ENCODE measurements at regions of chr20 and their contacts with region 1.

Region 1: GRCh38 chr20:62793912-62794724 is 2.2 kb upstream of the MRGBP start:
- DNase-seq: peak; percentile 95
- H3K4me3 ChIP-seq: peak overlapping the region; percentile 64 to 74
- H3K27ac ChIP-seq: peak overlapping the region; percentile 71 to 88
- H3K4me1 ChIP-seq: peaks cover 22 to 23% of the 10 kb centered on the region in 2 experiments; a peak in 3 of 4 replicates
- H3K27me3 ChIP-seq: no peaks in the 10 kb centered on the region
- CTCF ChIP-seq: no peak
- EP300 ChIP-seq: no peak
- RAD21 ChIP-seq: no peak

Region 2: DNA sequence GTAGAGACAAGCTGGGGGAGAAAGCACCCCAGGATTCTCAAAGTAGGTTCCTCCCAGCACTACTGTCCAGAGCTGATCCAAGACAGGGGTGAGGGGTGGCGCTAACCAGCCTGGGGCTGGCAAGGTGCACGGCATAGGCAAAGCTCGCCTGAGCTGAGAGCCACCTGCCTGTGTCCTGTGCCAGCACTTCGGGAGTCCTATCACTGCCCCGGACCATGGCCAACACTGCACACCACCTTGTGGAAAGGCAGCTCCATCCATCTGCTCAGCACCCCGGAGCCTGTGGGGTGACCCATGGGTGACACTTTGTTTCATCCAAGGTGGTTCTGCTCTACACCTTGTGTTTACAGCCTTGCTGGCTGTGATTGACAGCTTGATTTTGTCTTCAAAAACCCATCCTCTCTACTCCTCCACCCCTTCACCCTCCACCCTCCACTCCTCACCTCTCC is 285.5 kb before region 1 on chr20:
- CTCF ChIA-PET with region 1: interaction called, 10 read pairs
- POLR2A ChIA-PET with region 1: no interaction called
- DNase-seq: no peak
- H3K4me3 ChIP-seq: no peak overlapping the region
- H3K27ac ChIP-seq: no peak overlapping the region
- H3K4me1 ChIP-seq: peaks cover 0 to 5% of the 10 kb centered on the region in 2 experiments; a peak in 1 of 4 replicates
- H3K27me3 ChIP-seq: no peaks in the 10 kb centered on the region; the same call in 1 of the 2 replicates
- CTCF ChIP-seq: no peak
- EP300 ChIP-seq: no peak
- RAD21 ChIP-seq: no peak

Region 3: DNA sequence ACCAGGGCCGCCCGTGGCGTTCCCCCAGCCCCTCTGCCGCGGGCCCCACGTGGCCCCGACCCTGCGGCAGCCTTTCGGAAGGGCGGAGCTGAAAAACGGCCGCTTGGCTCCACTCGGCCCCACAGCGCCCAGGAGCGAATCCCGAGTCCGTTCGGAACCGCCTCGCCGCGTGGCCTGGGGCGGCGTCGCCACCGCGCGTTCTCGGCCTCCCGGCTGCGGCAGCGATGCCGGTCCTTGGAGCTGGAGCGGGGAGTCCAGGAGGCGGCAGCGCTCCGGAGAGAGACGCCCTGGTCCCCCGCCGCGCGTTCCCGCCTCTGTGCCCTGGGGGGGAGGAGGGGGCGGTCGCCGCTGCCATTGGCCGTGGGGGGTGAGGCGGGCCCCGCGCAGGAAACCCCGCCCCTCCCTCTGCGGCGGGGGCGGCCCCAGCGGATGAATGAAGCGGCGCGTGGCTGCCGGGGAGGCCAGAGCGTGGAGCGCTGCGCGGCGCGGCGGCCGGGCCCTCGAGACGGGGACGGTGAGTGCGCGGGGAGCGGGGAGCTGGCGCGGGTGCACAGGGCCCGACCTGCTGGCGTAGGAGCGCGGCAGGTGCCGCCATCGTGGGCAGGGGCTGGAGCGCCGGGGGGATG is 152.0 kb before region 1 on chr20 and contains the start of gene SLCO4A1:
- CTCF ChIA-PET with region 1: interaction called, 30 read pairs
- POLR2A ChIA-PET with region 1: interaction called, 5 read pairs
- DNase-seq: peak; percentile 98
- H3K4me3 ChIP-seq: peak within 1 kb of the TSS; percentile 35 to 56; a peak in 3 of 4 replicates
- H3K27ac ChIP-seq: peak within 1 kb of the TSS in 1 of 2 experiments; percentile 74; a peak in 1 of 4 replicates
- H3K4me1 ChIP-seq: peaks cover 0 to 64% of the 10 kb centered on the region in 2 experiments; a peak in 2 of 4 replicates
- H3K27me3 ChIP-seq: peaks cover 37% of the 10 kb centered on the region
- CTCF ChIP-seq: no peak
- EP300 ChIP-seq: no peak
- RAD21 ChIP-seq: no peak
- polyA plus RNA-seq, gene SLCO4A1: 0.33 and 0.36 TPM in 2 replicates

Region 4: GRCh38 chr20:62675156-62675876 is 118.8 kb before region 1 on chr20:
- CTCF ChIA-PET with region 1: interaction called, 162 read pairs
- POLR2A ChIA-PET with region 1: interaction called, 3 read pairs
- DNase-seq: peak; percentile 64
- H3K4me3 ChIP-seq: no peak overlapping the region
- H3K27ac ChIP-seq: no peak overlapping the region
- H3K4me1 ChIP-seq: peaks cover 0 to 4% of the 10 kb centered on the region in 2 experiments; a peak in 1 of 4 replicates
- H3K27me3 ChIP-seq: no peaks in the 10 kb centered on the region
- CTCF ChIP-seq: no peak
- EP300 ChIP-seq: no peak
- RAD21 ChIP-seq: no peak

Region 5: DNA sequence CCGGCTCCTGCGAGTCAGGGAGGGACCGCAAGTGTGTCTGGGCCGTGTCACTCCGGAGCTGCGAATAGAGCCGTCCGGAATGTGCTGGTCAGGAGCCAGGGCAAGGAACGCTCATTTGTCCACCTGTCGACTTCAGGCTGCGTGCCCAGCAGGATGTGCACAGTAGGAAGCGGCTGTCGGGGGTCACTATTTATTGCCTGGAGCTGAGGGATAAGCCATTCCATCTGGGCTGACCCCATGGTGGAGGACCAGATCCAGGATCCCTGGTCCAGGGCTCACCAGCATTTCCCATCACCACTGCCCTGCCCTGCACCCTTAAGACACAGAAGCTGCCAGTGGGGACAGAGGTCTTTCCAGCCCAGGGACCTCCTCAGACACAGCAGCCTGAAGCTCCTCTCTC is 70.8 kb before region 1 on chr20:
- CTCF ChIA-PET with region 1: interaction called, 15 read pairs
- POLR2A ChIA-PET with region 1: no interaction called
- DNase-seq: no peak
- H3K4me3 ChIP-seq: no peak overlapping the region
- H3K27ac ChIP-seq: no peak overlapping the region
- H3K4me1 ChIP-seq: no peaks in the 10 kb centered on the region; a peak in 1 of 4 replicates
- H3K27me3 ChIP-seq: no peaks in the 10 kb centered on the region
- CTCF ChIP-seq: no peak
- EP300 ChIP-seq: no peak
- RAD21 ChIP-seq: no peak

Region 6: DNA sequence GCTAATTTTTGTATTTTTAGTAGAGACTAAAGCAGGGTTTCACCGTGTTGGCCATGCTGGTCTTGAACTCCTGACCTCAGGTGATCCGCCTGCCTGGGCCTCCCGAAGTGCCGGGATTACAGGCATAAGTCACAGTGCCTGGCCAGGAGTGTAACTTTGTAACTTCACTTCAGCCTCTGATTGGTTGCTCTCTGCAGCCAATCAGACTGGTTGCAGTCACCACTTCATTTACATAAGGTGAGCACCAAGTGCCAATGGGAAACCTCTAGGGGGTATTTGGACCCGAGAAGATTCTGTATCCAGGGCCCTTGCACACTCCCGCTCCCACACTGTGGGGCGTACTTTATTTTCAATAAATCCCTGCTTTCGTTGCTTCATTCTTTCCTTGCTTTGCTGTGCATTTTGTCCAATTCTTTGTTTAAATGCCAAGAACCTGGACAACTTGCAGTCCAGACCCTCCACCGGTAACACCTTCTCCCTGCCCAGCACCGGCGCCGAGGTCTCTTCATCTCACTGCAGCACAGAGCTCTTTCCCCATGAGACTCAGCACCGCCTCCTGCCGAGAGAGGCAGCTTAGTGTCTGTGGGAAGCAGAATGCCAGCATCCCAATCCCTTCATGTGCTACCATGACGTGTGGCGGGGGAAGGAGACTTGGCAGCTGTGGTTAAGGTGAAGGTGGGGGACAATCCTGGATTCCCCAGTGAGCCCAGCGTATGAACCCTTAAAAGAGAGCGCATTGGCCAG is 11.8 kb before region 1 on chr20:
- CTCF ChIA-PET with region 1: interaction called, 31 read pairs
- POLR2A ChIA-PET with region 1: no interaction called
- DNase-seq: no peak
- H3K4me3 ChIP-seq: no peak overlapping the region
- H3K27ac ChIP-seq: no peak overlapping the region
- H3K4me1 ChIP-seq: peaks cover 0 to 26% of the 10 kb centered on the region in 2 experiments; a peak in 1 of 4 replicates
- H3K27me3 ChIP-seq: no peaks in the 10 kb centered on the region
- CTCF ChIP-seq: no peak
- EP300 ChIP-seq: no peak
- RAD21 ChIP-seq: no peak

Measured in SK-N-SH (cell line).